Activated T-helper 2 cell treated with anti-CD3 and anti-CD28 coated beads, Interferon-gamma antibody, Interleukin-2, Interleukin-4, amounts not matched to agents 10 μg/mL and 5 μg/mL and 100 μg/mL, durations not matched to agents 14 hours and 24 hours and 36 hours (primary cell): ENCODE measurements at regions of chr9 and their contacts with region 1.

Region 1: GRCh38 chr9:114397848-114398605 is 10.2 kb upstream of the AKNA start:
- DNase-seq: peak; percentile 92
- H3K4me3 Mint-ChIP-seq: peak overlapping the region; percentile 85
- H3K27ac Mint-ChIP-seq: peak overlapping the region; percentile 73
- H3K4me1 Mint-ChIP-seq: peaks cover 31% of the 10 kb centered on the region
- H3K27me3 Mint-ChIP-seq: no peaks in the 10 kb centered on the region

Region 2: GRCh38 chr9:114339130-114339908 is 58.7 kb before region 1 on chr9:
- intact Hi-C with region 1: loop called (anchors 2 kb)
- DNase-seq: peak; percentile 37
- H3K4me3 Mint-ChIP-seq: no peak overlapping the region
- H3K27ac Mint-ChIP-seq: peak overlapping the region; percentile 0
- H3K4me1 Mint-ChIP-seq: peaks cover 9% of the 10 kb centered on the region
- H3K27me3 Mint-ChIP-seq: no peaks in the 10 kb centered on the region

Region 3: DNA sequence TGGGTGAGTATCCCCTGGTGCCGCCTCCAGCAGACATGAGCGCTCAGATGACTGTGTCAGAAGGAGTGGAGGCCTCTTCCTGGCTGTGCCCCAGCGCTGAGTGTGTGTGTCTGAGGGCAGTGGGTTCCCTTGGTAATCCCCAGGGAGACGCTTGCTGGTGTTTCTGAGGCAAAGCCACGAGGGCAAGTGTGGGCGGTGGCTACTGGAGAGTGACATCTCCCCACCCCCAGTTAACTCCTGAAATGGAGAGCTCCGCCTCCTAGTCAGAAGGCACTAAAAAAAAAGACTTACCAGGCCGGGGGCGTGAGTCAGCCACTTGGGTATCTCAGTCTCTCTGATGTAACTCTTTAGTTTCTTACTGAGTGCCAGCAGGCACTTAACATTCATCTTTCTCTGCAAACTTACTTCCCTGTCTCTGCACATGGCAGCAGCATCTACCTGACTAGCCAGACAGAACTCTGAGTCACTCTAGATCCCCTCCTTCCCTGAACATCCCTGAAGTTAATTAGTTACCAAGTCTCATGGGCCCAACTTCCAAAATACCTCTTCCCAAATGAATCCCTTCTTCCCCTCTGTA is 49.0 kb before region 1 on chr9:
- intact Hi-C with region 1: loop called (anchors 1 kb)
- DNase-seq: peak; percentile 50
- H3K4me3 Mint-ChIP-seq: peak overlapping the region; percentile 5
- H3K27ac Mint-ChIP-seq: peak overlapping the region; percentile 93
- H3K4me1 Mint-ChIP-seq: peaks cover 44% of the 10 kb centered on the region
- H3K27me3 Mint-ChIP-seq: no peaks in the 10 kb centered on the region

Region 4: DNA sequence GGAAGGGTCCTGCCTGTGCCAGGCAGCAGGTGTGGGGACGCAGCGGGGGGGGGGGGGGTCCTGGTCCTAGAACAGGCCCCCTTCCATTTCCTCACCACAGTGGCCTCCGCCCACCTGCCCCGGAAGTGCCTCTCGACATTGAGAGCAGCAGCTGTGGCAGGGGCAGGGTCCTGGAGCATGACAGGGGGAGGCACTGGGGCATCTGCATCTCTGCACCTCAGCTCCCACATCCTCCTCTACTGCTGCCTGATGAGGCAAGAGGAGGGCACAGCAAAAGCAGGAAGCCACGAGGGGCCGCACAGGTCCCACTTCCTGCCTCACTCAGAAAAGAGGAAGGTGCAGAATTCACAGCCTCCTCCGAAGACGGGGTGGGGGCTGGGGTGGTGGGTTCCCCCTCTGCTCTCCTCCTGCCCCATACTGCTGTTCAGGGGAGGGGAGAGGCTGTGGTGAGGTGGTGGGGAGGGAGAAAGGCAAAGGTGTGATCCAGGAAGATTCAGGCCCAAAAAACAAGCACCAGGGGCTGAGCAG is 25.0 kb before region 1 on chr9:
- intact Hi-C with region 1: loop called (anchors 1 kb)
- DNase-seq: peak; percentile 83
- H3K4me3 Mint-ChIP-seq: peak overlapping the region; percentile 76
- H3K27ac Mint-ChIP-seq: peak overlapping the region; percentile 85
- H3K4me1 Mint-ChIP-seq: peaks cover 77% of the 10 kb centered on the region
- H3K27me3 Mint-ChIP-seq: no peaks in the 10 kb centered on the region